ENCODE measurements at regions of chr2 and their contacts with region 1.

Region 1: GRCh38 chr2:19362755-19363473 is 4.5 kb upstream of the OSR1 start:
- DNase-seq: peak; percentile 78

Region 2: DNA sequence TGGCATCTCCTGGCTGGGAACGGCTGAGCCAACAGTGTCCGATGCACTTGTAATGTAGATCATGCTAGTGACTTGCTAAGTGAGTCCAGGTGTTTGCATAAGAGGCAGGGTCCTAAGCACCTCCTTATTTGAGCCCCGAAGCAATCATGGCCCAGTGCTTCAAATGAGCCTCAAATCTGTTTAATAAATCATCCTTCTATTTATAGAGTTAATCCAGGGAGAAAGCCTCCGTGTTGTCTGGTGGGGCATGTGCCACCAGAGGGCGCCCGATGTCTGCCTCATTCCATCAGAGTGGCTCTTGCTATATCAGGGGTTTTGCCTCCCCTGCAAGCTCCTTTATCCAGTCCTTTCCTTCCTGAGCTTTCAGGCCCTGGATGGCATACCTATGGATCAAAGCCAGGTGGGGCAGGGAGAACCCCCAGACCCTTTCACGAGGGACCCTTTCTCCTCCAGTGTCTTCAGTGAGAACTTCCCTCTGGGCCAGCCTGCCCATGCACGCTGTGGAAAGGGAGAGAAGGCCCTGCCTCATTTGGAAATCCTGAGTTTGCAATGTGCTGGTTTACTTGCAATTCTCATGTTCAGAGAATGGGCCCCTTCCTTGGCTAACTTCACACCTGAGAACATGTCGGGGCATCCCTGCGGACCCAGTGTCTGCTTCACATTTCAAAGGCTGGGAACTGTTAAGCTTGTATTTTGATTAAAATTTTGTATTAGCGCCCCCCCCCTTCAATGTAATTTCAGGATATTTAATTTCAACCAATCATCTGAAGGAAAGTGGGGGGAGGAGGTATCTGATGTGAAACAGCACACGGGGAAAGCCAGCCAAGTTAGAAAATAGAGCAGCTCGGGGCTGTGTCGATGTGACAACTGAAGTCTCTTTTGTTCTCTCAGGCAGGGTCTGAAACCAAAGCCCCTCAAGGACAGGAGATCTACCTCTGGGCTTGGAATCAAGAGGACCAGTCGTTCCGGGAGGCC is 842.2 kb before region 1 on chr2:
- in situ Hi-C with region 1: loop called (anchors 25 kb)
- DNase-seq: peak; percentile 71

Region 3: GRCh38 chr2:19589791-19590190 is 226.9 kb after region 1 on chr2:
- in situ Hi-C with region 1: no loop called
- DNase-seq: no peak

Region 4: DNA sequence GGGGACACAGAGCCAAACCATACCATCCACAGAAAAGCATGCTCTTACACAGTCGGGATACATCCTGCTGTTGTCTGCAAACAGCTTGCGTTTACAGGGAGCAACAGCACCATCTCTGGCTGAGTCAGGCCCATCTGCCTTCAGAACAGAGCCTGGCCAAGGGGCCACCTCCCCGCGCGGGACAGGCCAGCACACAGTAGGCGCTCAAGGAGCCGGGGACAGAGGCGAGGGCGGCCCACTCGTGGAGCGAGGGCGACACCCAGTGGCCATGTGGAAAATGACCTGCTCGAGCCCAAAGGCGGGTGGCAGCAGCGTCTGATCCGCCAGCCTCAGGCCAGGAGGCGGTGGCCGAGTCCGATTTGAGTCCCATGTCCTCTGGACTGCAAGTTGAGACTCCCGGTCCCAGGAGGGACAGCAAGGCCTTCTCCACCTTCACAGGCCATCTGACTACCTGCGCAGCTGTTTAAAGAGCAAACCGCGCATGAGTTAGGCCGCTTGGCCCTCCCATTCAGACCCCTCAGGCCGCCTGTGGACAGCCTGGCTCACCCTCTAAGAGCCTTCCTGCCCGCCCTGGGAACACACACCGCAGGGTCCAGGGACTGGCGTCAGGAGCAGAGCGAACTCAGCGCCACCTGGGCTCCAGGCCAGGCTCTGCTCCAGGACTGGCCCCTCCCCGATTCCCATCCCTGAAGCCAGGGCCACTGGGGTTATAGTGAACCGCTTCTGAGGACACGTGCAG is 500.6 kb after region 1 on chr2:
- in situ Hi-C with region 1: loop called (anchors 25 kb)
- DNase-seq: peak; percentile 59